HCT116 (cell line): ENCODE measurements at regions of chr10 and their contacts with region 1.

Region 1: GRCh38 chr10:21278491-21279239 is 246.8 kb downstream of the SKIDA1 start:
- DNase-seq: peak; percentile 89
- ATAC-seq: peak; percentile 98
- H3K4me3 ChIP-seq: no peak overlapping the region
- H3K27ac ChIP-seq: no peak overlapping the region
- H3K4me1 ChIP-seq: peaks cover 8 to 32% of the 10 kb centered on the region in 2 experiments; a peak in 3 of 4 replicates
- H3K27me3 ChIP-seq: no peaks in the 10 kb centered on the region
- CTCF ChIP-seq: peak; percentile 82 to 96 (median 85)
- POLR2A ChIP-seq: no peak
- RAD21 ChIP-seq: peak; percentile 97

Region 2: GRCh38 chr10:21495752-21496342 is 217.2 kb after region 1 on chr10:
- CTCF ChIA-PET with region 1: interaction called, 15 read pairs
- POLR2A ChIA-PET with region 1: no interaction called
- RAD21 ChIA-PET with region 1: interaction called, 6 to 8 read pairs
- intact Hi-C with region 1: loop called (anchors 2 kb)
- DNase-seq: peak; percentile 67
- ATAC-seq: peak; percentile 72
- H3K4me3 ChIP-seq: peak overlapping the region; percentile 63 to 80
- H3K27ac ChIP-seq: peak overlapping the region; percentile 83
- H3K4me1 ChIP-seq: peaks cover 2 to 20% of the 10 kb centered on the region in 2 experiments; a peak in 2 of 4 replicates
- H3K27me3 ChIP-seq: peaks cover 3% of the 10 kb centered on the region; the same call in 1 of the 2 replicates
- CTCF ChIP-seq: peak; percentile 72 to 92 (median 87)
- POLR2A ChIP-seq: peak; percentile 62
- RAD21 ChIP-seq: peak; percentile 96

Region 3: DNA sequence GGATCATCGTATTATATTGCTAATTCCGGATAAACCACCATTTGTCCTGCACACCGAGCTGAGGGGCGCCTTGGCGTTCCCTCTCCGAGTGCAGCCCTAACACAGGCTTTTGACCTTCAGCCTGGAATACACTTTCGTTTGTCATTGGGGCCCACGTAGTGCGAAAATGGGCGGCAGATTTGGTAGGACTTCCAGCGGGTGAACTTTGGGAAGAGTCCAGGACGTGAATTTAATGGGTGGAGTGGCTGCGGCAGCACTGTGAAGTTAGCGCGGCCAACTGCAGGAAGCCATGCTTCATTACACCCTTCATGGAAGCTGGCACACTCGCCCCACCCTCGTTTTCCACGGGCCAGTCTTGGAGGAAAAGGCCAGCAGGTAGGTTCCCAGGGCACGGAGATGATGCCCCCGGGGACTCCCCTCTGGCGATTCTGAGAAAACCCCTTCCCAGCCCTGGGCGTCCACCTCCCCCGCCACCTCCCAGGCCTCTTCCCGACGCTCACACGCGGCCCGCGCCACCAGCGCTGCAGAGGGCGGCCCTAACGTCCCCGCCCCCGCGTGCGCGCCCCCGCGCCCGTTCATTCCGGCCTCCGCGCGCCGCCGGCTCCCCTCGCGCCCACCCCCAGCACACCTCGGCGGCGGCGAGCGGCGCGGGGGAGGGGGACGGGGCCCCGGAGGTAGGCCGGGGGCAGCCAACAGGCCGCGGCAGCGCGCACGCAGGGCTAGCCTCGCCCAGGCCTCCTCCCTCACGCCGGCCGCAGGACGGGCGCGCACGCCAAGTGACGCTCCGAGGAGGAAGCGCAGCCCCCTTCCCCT is 255.0 kb after region 1 on chr10 and contains the start of gene MLLT10:
- CTCF ChIA-PET with region 1: interaction called, 3 read pairs
- POLR2A ChIA-PET with region 1: no interaction called
- RAD21 ChIA-PET with region 1: interaction called in 1 of 2 experiments, 3 read pairs
- intact Hi-C with region 1: loop called (anchors 1 kb)
- DNase-seq: peak; percentile 81
- ATAC-seq: peak; percentile 84
- H3K4me3 ChIP-seq: peak within 1 kb of the TSS; percentile 60 to 70
- H3K27ac ChIP-seq: peak within 1 kb of the TSS; percentile 76
- H3K4me1 ChIP-seq: peaks cover 21 to 65% of the 10 kb centered on the region in 2 experiments; a peak in 3 of 4 replicates
- H3K27me3 ChIP-seq: no peaks in the 10 kb centered on the region
- CTCF ChIP-seq: peak in 2 of 3 experiments; percentile 28 to 34; a peak in 3 of 6 replicates
- POLR2A ChIP-seq: peak; percentile 63
- RAD21 ChIP-seq: 0 out of 2 replicates have a peak, but pooled peaks have one; percentile 0
- total RNA-seq, gene MLLT10: 45.2 TPM

Region 4: GRCh38 chr10:21732067-21732772 is 453.6 kb after region 1 on chr10:
- CTCF ChIA-PET with region 1: interaction called, 8 read pairs
- POLR2A ChIA-PET with region 1: no interaction called
- RAD21 ChIA-PET with region 1: no interaction called
- intact Hi-C with region 1: loop called (anchors 1 kb)
- DNase-seq: peak; percentile 44
- ATAC-seq: peak; percentile 95
- H3K4me3 ChIP-seq: no peak overlapping the region
- H3K27ac ChIP-seq: no peak overlapping the region
- H3K4me1 ChIP-seq: peaks cover 5 to 19% of the 10 kb centered on the region in 2 experiments
- H3K27me3 ChIP-seq: no peaks in the 10 kb centered on the region
- CTCF ChIP-seq: peak; percentile 68 to 95 (median 94)
- POLR2A ChIP-seq: no peak
- RAD21 ChIP-seq: peak; percentile 93